ENCODE measurements at regions of chr20 and their contacts with region 1.

Region 1: DNA sequence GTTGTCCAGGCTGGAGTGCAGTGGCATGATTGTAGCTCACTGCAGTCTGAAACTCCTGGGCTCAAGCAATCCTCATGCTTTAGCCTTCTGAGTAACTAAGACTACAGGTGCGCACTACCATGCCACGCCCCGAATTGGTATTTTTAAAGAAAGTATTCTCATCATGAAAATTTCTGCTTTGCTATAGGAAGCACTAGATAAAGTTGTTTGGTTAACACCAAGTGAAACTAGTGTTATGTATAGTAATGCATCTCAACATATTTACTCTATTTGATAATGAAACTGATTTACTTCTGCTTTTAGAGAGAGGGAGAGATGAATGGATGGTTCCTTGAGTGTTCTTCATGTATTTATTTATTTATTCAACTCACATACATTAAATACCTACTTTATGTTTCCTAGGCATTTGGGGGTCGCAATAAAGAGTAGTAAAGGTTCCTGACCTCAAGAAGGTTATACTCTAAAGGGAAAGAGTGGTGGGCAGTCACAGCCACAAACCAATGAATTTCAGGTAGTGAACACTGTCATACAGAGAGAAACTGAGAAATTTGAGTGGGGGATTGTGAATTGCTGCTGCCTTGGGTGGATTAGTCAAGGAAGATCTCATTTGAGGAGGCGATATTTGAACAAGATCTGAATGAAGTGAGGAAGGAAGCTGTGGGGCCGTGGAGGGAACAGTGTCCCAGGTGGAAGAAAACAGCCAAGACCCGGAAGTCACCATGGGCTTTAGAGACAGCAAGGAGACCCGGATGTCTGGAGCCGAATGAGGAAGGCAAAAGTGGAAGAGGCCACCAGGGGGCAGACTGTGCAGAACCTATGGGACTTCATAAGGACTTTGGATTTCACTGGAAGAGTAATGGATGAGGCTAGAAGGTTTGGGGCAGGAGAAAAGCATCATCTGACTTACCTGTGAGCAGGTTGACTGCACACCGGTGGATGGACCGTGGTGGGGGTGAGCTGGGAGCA is 185.6 kb downstream of the TSHZ2 start:
- DNase-seq: peak; percentile 1
- H3K4me3 ChIP-seq: no peak overlapping the region
- H3K27ac ChIP-seq: no peak overlapping the region
- H3K27me3 ChIP-seq: no peaks in the 10 kb centered on the region
- CTCF ChIP-seq: peak; percentile 70

Region 2: GRCh38 chr20:52438324-52438963 is 719.3 kb before region 1 on chr20:
- CTCF ChIA-PET with region 1: interaction called, 10 read pairs
- POLR2A ChIA-PET with region 1: no interaction called
- DNase-seq: no peak
- H3K4me3 ChIP-seq: no peak overlapping the region
- H3K27ac ChIP-seq: no peak overlapping the region
- H3K27me3 ChIP-seq: no peaks in the 10 kb centered on the region
- CTCF ChIP-seq: no peak

Region 3: DNA sequence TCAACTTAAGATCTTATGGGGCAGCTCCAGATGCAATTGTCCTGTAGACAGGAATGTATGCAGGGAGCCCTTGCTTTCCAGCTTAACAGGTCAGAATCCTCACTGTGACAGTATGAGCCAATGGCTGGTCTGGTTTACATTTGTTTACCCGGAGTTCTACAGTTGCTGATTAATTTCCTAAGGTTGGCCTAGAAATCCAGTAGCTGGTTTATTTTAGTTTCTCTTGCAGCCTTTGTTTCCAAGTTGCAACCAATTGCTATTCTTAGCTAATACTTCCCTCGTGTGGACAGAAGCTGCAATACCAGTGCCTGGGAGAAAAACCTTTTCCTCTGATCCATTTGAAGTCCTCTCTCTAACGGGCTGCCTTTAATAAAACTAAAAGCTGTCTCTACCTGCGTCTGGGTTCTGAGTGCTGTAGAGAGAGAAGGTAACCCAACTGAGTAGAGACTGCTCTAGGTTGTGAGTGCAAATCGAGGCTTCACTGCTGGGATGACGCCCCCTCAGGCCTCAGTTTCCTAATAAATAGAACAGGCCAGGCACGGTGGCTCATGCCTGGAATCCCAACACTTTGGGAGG is 390.0 kb after region 1 on chr20:
- CTCF ChIA-PET with region 1: interaction called, 56 read pairs
- POLR2A ChIA-PET with region 1: no interaction called
- DNase-seq: peak; percentile 47
- H3K4me3 ChIP-seq: no peak overlapping the region
- H3K27ac ChIP-seq: no peak overlapping the region
- H3K27me3 ChIP-seq: no peaks in the 10 kb centered on the region
- CTCF ChIP-seq: peak; percentile 92

Measured in AG04450 (cell line).